ENCODE measurements at regions of chr6 and their contacts with region 1.

Region 1: DNA sequence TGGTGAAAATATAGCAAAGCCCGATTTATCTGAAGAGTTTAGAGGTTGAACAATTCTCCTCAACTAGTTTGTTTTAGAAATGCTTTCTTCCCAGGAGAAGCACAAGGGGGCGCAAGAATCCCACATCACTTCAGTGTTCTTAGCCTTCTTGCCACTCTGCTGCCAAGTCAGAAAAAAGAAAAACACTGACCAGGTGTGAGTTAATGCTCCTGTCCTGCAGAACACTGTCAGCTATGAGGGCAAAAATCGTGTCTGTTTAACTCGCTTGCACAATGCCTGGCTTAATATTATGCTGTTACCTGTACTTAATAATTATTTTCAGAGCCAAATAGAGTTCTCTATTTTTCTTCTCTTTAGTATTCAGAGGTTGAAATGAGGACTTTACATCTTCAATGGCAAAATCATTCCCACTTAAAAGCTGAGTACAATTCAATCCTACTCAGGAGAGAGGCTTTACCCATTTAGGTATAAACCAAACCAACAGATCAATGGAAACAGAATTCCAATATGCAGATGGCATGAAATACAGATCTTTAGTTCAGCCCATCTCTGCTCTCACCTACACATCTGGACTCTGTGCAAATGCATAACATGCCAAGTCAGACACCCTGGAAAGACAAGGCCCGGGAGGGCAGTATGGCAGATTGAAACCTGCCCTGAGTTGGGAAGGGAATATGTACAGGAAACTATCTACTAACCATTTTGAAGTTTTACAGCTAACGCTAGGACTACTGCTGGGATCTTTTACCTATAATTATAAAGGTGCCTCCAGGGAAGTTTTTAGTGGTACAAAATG is 71.4 kb upstream of the TULP1 start:
- DNase-seq: peak; percentile 87
- ATAC-seq: peak; percentile 71
- H3K4me3 Mint-ChIP-seq: no peak overlapping the region
- H3K27ac Mint-ChIP-seq: no peak overlapping the region
- H3K4me1 Mint-ChIP-seq: peaks cover 53% of the 10 kb centered on the region
- H3K27me3 Mint-ChIP-seq: no peaks in the 10 kb centered on the region
- CTCF ChIP-seq: peak; percentile 91

Region 2: GRCh38 chr6:35489995-35490733 is 93.9 kb before region 1 on chr6:
- CTCF ChIA-PET with region 1: no interaction called
- POLR2A ChIA-PET with region 1: no interaction called
- intact Hi-C with region 1: no loop called
- DNase-seq: no peak
- ATAC-seq: no peak
- H3K4me3 Mint-ChIP-seq: no peak overlapping the region
- H3K27ac Mint-ChIP-seq: no peak overlapping the region
- H3K4me1 Mint-ChIP-seq: peaks cover 17% of the 10 kb centered on the region
- H3K27me3 Mint-ChIP-seq: no peaks in the 10 kb centered on the region
- CTCF ChIP-seq: no peak

Region 3: DNA sequence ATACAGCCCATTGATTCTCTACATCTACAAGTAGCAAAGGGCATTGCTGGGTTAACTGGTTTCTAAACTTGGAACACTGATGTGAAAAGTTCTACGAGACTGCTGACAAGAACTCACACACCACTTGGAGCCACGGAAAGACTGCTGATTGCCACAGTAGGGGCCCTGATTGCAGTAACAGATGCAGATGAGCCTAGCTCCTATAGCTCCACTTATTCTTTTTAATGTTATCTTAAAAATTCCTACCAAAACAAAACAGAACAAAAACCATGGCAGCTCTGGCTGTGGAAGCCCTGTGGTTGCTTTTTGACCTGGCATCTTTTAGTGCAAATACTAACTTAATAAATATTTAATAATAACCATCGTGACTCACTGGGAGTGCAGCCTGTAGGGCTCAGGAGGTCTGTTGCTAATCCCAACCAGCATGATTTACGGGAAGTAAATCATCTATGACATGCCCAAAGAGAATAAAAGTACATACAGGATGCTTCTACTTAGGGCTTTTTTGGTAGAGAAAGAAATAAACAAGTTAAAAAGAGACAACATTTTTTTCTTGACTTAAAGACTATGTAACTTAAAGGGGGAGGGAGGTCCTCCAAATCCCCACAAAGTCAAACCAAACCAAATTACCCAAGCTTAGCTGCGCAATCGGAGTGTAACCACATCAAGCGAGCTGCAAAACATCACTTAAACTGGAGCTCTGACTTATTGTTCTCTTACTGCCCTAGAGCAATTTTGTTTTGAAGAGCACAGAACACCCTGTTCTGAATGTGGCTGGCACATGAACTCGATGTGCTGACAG is 17.4 kb after region 1 on chr6:
- CTCF ChIA-PET with region 1: interaction called, 20 read pairs
- POLR2A ChIA-PET with region 1: no interaction called
- intact Hi-C with region 1: no loop called
- DNase-seq: peak; percentile 76
- ATAC-seq: peak; percentile 71
- H3K4me3 Mint-ChIP-seq: peak overlapping the region; percentile 60
- H3K27ac Mint-ChIP-seq: peak overlapping the region; percentile 70
- H3K4me1 Mint-ChIP-seq: peaks cover 70% of the 10 kb centered on the region
- H3K27me3 Mint-ChIP-seq: no peaks in the 10 kb centered on the region
- CTCF ChIP-seq: no peak

Region 4: DNA sequence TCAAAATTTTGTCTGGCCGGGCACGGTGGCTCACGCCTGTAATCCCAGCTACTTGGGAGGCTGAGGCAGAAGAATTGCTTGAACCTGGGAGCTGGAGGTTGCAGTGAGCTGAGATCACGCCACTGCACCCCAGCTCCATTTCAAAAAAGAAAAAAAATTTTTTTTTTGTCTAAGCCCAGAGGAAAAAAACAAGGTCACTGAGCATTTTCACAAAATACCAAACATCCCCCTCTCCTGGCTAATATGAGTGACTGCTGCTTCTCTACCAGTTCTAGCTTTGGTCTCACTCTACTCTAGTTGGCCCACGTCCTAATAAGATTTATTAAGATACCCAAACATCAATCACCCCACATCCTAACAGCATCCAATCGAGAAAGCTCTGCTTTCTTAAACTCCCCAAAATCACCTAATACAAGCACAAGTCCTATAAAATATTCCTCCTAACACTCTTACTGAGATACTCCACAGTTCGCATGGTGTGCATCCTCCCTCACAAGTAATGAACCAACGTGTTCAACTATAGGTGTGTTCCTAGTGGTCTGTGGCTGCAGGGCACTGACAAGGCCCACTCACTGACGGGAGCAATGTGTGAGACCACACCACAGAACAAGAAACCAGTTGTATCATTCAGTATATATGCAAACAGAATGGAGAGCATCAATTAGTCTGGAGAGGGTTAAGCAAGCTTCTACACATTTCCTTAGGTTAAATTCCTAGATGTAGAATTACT is 40.4 kb after region 1 on chr6:
- CTCF ChIA-PET with region 1: interaction called, 63 read pairs
- POLR2A ChIA-PET with region 1: interaction called, 5 read pairs
- intact Hi-C with region 1: loop called (anchors 5 kb)
- DNase-seq: peak; percentile 35
- ATAC-seq: peak; percentile 73
- H3K4me3 Mint-ChIP-seq: no peak overlapping the region
- H3K27ac Mint-ChIP-seq: peak overlapping the region; percentile 57
- H3K4me1 Mint-ChIP-seq: peaks cover 38% of the 10 kb centered on the region
- H3K27me3 Mint-ChIP-seq: no peaks in the 10 kb centered on the region
- CTCF ChIP-seq: peak; percentile 49

Region 5: GRCh38 chr6:35688581-35689322 is 104.7 kb after region 1 on chr6 and contains the start of gene FKBP5:
- CTCF ChIA-PET with region 1: interaction called, 6 read pairs
- POLR2A ChIA-PET with region 1: no interaction called
- intact Hi-C with region 1: loop called (anchors 5 kb)
- DNase-seq: peak; percentile 95
- ATAC-seq: peak; percentile 94
- H3K4me3 Mint-ChIP-seq: peak within 1 kb of the TSS; percentile 91
- H3K27ac Mint-ChIP-seq: peak within 1 kb of the TSS; percentile 91
- H3K4me1 Mint-ChIP-seq: peaks cover 9% of the 10 kb centered on the region
- H3K27me3 Mint-ChIP-seq: no peaks in the 10 kb centered on the region
- CTCF ChIP-seq: no peak
- total RNA-seq, gene FKBP5: 90.6 to 93.4 TPM